Heart right ventricle (tissue), 16 donors: ENCODE measurements at regions of chr3 and their contacts with region 1.

Region 1: GRCh38 chr3:62622553-62623193 is 249.3 kb upstream of the FEZF2 start:
- DNase-seq: no peak
- ATAC-seq: peak in 4 of 8 donors; percentile 33 to 63 (median 42)
- H3K4me3 ChIP-seq: no peak overlapping the region
- H3K27ac ChIP-seq: no peak overlapping the region
- H3K4me1 ChIP-seq: no peaks in the 10 kb centered on the region
- H3K27me3 ChIP-seq: no peaks in the 10 kb centered on the region
- CTCF ChIP-seq: peak; percentile 47 to 77 (median 68)

Region 2: DNA sequence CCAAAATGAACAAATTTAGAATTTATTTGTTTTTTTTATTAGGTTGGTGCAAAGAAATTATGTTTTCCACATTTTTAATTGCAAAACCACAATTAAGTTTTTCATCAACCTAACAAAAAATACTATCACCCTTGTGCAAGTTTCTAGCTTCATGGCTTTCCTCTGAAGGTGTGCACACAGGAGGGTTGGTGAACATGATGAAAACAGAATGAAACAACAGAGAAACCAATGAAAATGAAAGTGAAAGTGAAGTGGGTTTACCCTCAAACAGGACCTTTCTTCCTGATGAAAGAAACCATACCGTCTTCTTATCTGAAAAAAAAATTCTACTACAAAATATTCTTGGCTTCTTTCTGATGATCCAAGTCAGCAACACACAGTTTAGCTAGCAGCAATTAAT is 177.4 kb before region 1 on chr3:
- intact Hi-C with region 1: no loop called
- DNase-seq: no peak
- ATAC-seq: no peak
- H3K4me3 ChIP-seq: peak overlapping the region in 1 of 10 donors; percentile 3
- H3K27ac ChIP-seq: no peak overlapping the region
- H3K4me1 ChIP-seq: peaks cover 0 to 5% (median 0%) of the 10 kb centered on the region in 9 donors
- H3K27me3 ChIP-seq: no peaks in the 10 kb centered on the region
- CTCF ChIP-seq: no peak

Region 3: GRCh38 chr3:62665598-62666437 is 43.1 kb after region 1 on chr3:
- intact Hi-C with region 1: loop called in 1 of 10 experiments (anchors 5 kb)
- DNase-seq: peak; percentile 64
- ATAC-seq: peak; percentile 66 to 89 (median 82)
- H3K4me3 ChIP-seq: peak overlapping the region in 1 of 10 donors; percentile 20
- H3K27ac ChIP-seq: no peak overlapping the region
- H3K4me1 ChIP-seq: peaks cover 0 to 15% (median 0%) of the 10 kb centered on the region in 9 donors
- H3K27me3 ChIP-seq: no peaks in the 10 kb centered on the region
- CTCF ChIP-seq: peak; percentile 41 to 76 (median 61)

Region 4: DNA sequence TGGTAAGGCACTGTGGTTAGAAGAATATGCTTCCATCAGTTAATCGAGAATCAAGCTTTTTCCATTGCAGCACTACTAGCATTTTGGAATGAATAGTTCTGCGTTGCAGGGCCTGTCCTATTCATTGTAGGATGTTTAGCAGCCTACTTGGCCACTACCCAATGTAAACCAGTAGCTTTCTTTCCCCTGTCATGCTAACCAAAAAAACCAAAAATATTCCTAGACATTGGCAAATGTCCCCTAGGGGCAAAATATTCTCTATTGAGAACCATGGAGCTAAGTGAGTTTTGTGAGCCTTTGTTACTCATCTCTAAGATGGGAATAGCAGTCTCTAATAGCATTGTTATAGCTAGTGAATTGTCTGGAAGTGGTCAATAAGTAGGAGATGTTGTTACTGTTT is 65.4 kb after region 1 on chr3:
- intact Hi-C with region 1: no loop called
- DNase-seq: no peak
- ATAC-seq: peak in 1 of 8 donors; percentile 18
- H3K4me3 ChIP-seq: no peak overlapping the region
- H3K27ac ChIP-seq: no peak overlapping the region
- H3K4me1 ChIP-seq: peaks cover 0 to 5% (median 0%) of the 10 kb centered on the region in 9 donors
- H3K27me3 ChIP-seq: no peaks in the 10 kb centered on the region
- CTCF ChIP-seq: no peak

Region 5: GRCh38 chr3:62737449-62737848 is 114.8 kb after region 1 on chr3:
- intact Hi-C with region 1: no loop called
- DNase-seq: no peak
- ATAC-seq: no peak
- H3K4me3 ChIP-seq: no peak overlapping the region
- H3K27ac ChIP-seq: no peak overlapping the region
- H3K4me1 ChIP-seq: no peaks in the 10 kb centered on the region
- H3K27me3 ChIP-seq: no peaks in the 10 kb centered on the region
- CTCF ChIP-seq: no peak

Region 6: DNA sequence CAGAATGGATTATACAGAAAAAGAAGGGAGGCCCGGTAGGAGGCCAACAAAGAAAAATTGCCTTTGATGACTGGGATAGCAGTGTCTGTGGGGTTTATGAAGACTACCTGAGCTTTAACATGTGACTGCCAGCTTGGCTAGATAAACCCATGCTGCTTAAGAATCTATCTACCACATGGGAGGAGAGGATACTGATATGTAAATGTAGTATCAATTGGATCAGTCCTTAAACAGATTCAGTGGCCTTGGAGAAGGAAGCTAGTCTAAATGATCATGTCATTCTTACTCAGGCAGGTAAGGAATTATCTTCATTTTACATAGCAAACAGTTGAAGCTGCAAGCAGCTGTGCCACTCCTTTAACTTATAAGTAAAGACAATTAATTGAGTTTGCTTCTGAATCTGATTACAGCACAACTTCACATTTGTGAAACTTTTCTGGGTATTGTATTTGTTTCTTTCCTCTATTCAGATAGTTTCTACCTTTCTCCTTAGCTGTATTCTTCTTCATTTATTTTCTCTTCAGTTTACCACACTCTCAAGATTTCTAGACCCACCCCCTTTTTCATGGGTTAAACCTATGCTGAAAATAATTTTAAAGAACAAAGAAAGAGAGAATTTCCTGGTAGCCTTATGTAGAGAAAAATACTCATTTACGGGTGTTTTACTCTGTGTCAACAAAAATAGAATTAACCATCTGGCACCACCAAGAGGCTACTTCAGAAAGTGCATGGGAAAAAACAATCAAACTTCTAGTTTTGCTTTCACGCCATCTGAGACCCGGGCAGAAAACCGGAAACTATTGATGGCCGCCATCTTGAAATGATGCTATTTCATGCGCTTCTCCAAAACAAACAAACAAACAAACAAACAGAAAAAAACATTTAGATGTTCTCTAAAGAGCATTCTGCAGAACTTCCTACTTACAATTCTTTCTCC is 605.7 kb after region 1 on chr3:
- intact Hi-C with region 1: loop called in 6 of 10 experiments (anchors 2 to 5 kb)
- DNase-seq: peak in 1 of 2 donors; percentile 5
- ATAC-seq: peak in 1 of 8 donors; percentile 47
- H3K4me3 ChIP-seq: peak overlapping the region in 1 of 10 donors; percentile 18
- H3K27ac ChIP-seq: no peak overlapping the region
- H3K4me1 ChIP-seq: no peaks in the 10 kb centered on the region
- H3K27me3 ChIP-seq: no peaks in the 10 kb centered on the region
- CTCF ChIP-seq: peak in 8 of 9 donors; percentile 32 to 65 (median 52)

Region 7: DNA sequence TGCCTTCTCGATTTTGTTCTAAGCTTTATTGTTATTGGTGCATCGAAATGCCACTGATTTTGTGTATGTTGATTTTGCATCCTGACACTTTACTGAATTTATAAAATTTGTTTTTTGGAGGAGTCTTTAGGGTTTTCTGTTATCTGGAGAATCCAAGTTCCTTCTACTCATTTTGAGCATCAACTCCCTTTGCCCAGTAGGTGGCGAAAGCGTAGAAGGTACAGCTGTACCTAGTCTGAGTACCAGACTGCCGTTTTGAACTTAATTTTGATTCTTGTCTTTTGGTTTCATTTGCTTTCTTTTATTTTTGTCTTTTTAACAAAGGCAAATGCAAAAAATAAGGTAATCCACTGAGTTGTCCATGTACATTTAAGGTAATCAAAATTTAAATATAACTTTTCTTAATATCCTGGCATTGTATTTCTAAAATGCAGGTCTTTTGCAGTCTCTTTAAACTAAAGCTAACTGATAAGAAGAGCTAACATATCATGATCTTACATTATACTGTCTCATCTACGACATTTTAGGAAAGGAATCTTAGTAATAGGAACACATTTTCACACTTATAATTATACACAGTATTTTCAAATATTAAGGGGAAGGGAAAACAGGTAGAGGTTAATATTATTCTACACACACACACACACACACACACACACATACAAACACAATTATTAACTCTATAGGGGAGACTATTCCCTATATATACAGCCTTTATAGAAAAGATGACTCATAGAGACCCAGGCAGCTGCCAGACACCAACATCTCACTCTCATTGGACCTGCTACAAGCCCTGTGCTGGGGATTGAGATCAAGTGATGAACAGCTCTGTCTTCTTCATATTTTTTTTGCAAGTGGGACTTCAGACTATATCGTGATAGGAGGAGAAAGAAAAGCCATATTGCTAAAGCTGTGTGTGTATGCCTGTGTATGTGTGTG is 727.2 kb after region 1 on chr3:
- intact Hi-C with region 1: loop called in 1 of 10 experiments (anchors 10 kb)
- DNase-seq: peak in 1 of 2 donors; percentile 14
- ATAC-seq: peak in 1 of 8 donors; percentile 49
- H3K4me3 ChIP-seq: no peak overlapping the region
- H3K27ac ChIP-seq: no peak overlapping the region
- H3K4me1 ChIP-seq: peaks cover 0 to 3% (median 0%) of the 10 kb centered on the region in 9 donors
- H3K27me3 ChIP-seq: peaks cover 0 to 45% (median 22%) of the 10 kb centered on the region in 7 donors
- CTCF ChIP-seq: peak; percentile 34 to 80 (median 72)

Region 8: GRCh38 chr3:63824309-63824708 is 1201.6 kb after region 1 on chr3:
- intact Hi-C with region 1: loop called in 4 of 10 experiments (anchors 5 to 10 kb)
- DNase-seq: no peak
- ATAC-seq: no peak
- H3K4me3 ChIP-seq: no peak overlapping the region
- H3K27ac ChIP-seq: no peak overlapping the region
- H3K4me1 ChIP-seq: no peaks in the 10 kb centered on the region
- H3K27me3 ChIP-seq: no peaks in the 10 kb centered on the region
- CTCF ChIP-seq: no peak